ENCODE measurements at regions of chr1 and their contacts with region 1.

Region 1: GRCh38 chr1:224051086-224051406 is 62.9 kb upstream of the FBXO28 start:
- DNase-seq: no peak
- H3K4me3 Mint-ChIP-seq: no peak overlapping the region
- H3K27ac Mint-ChIP-seq: no peak overlapping the region
- H3K4me1 Mint-ChIP-seq: no peaks in the 10 kb centered on the region
- H3K27me3 Mint-ChIP-seq: peaks cover 2% of the 10 kb centered on the region

Region 2: DNA sequence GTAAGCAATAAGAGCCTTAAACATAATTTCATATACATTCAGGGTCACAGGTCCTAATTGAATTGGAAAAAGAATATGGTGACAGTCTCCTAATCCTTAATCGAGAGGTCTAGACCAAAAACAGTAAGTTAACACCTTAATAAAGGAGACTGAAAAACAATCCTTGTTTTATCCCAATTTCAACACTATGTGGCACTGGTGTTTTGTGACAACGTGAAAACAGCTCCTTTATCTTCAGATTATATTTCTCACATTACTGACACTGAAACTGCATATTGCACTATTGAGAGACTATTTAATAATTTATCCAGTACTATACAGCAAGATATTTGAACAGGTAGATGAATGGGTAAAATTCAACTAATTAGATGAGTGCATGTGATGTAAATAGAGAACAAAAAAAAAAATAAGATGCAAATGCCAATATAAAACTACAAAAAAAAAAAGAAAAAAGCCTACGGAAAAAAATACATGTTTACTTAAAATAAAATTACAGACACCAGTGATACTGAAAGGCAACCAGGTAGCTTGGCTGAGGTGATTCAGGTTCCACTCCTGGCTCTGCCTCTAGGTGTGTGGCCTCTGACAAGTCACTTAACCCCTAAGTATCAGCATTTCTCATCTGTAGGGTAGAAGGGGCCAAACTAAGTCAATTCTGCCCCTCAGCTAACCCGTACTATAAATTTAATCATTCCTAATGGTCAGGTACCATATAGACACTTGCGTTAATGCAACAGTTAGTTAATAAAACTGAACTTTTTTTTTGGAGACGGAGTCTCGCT is 239.2 kb before region 1 on chr1:
- CTCF ChIA-PET with region 1: interaction called, 10 read pairs
- POLR2A ChIA-PET with region 1: no interaction called
- intact Hi-C with region 1: no loop called
- DNase-seq: no peak
- H3K4me3 Mint-ChIP-seq: no peak overlapping the region
- H3K27ac Mint-ChIP-seq: no peak overlapping the region
- H3K4me1 Mint-ChIP-seq: peaks cover 32% of the 10 kb centered on the region
- H3K27me3 Mint-ChIP-seq: no peaks in the 10 kb centered on the region

Region 3: DNA sequence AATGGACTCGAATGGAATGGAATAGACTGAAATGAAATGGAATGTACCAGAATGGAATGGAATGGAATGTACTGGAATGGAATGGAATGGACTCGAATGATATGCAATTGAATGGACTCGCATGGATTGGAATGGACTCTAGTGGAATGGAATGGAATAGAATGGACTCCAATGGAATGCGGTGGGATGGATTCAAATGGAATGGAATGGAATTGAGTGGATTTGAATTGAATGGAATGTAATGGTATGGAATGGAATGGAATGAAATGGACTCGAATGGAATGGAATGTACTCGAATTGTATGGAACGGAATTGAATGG is 36.8 kb before region 1 on chr1:
- CTCF ChIA-PET with region 1: no interaction called
- POLR2A ChIA-PET with region 1: no interaction called
- intact Hi-C with region 1: no loop called
- DNase-seq: no peak
- H3K4me3 Mint-ChIP-seq: no peak overlapping the region
- H3K27ac Mint-ChIP-seq: no peak overlapping the region
- H3K4me1 Mint-ChIP-seq: no peaks in the 10 kb centered on the region
- H3K27me3 Mint-ChIP-seq: no peaks in the 10 kb centered on the region

Region 4: DNA sequence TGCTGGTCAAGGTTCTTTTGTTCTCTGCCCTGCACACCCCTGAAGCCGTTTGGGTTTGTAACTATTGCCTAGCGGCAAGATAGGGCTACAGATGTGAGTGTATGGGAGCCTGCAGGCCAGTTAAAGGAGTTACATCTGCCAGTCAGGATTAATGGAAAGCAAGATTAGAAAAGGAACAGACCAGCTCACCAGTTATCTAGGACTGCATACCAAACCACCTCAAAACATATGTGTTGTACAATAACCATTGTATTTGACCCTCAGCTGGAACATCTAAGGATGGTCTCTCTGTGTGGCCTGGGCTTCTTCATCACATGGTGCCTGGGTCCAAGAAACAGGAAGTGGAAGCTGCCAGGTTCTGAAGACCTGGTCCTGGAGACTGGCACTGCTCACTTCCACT is 10.4 kb after region 1 on chr1:
- CTCF ChIA-PET with region 1: interaction called, 10 read pairs
- POLR2A ChIA-PET with region 1: no interaction called
- intact Hi-C with region 1: no loop called
- DNase-seq: no peak
- H3K4me3 Mint-ChIP-seq: no peak overlapping the region
- H3K27ac Mint-ChIP-seq: no peak overlapping the region
- H3K4me1 Mint-ChIP-seq: peaks cover 5% of the 10 kb centered on the region
- H3K27me3 Mint-ChIP-seq: no peaks in the 10 kb centered on the region

Measured in activated CD4-positive, alpha-beta memory T cell treated with anti-CD3 and anti-CD28 coated beads for 36 hours (primary cell).